ENCODE measurements at regions of chr1 and their contacts with region 1.

Region 1: GRCh38 chr1:59296358-59297256 is at the start of gene FGGY:
- DNase-seq: peak; percentile 97 to 99
- ATAC-seq: peak; percentile 93 to 98 (median 94)
- H3K4me3 ChIP-seq: peak within 1 kb of the TSS; percentile 45 to 68 (median 61)
- H3K27ac ChIP-seq: peak within 1 kb of the TSS; percentile 92 to 99 (median 97)
- H3K4me1 ChIP-seq: peaks cover 0 to 50% (median 17%) of the 10 kb centered on the region in 9 donors
- H3K27me3 ChIP-seq: no peaks in the 10 kb centered on the region
- CTCF ChIP-seq: peak in 1 of 9 donors; percentile 6
- total RNA-seq, gene FGGY: 26.3 to 51.8 (median 36.6) TPM

Region 2: DNA sequence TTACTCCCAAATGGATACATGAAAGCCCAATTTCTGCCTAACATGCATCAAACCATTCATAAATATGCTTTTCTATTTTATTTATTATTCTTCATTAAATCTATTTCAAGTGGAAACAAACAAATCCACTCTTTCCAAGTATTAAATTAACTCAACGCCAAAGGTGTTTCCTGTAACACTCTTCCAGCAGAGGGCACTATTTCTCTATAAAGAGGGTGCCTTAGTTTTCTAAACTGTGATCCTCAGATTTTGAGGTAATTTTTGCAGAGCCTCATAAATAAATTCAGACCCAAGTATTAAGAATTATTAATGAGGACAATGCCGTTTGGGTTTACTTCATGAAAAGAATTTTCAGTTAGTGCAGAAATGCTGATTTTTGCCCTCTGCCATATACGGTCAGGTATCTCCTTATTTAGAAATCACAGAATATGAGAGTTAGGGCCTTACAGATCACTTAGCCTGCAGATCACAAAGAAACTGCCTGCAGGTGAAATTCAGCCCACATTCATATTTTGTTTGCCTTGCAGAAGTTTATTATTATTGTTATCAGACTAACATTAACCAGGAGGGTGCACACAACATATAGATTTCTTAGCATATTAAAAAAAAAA is 556.6 kb before region 1 on chr1:
- intact Hi-C with region 1: loop called in 1 of 10 experiments (anchors 10 kb)
- DNase-seq: peak in 1 of 2 donors; percentile 52
- ATAC-seq: peak in 6 of 8 donors; percentile 49 to 76 (median 64)
- H3K4me3 ChIP-seq: no peak overlapping the region
- H3K27ac ChIP-seq: no peak overlapping the region
- H3K4me1 ChIP-seq: peaks cover 0 to 24% (median 3%) of the 10 kb centered on the region in 9 donors
- H3K27me3 ChIP-seq: no peaks in the 10 kb centered on the region
- CTCF ChIP-seq: peak; percentile 73 to 95 (median 86)

Region 3: GRCh38 chr1:58896246-58897183 is 400.1 kb before region 1 on chr1:
- intact Hi-C with region 1: loop called in 6 of 10 experiments (anchors 5 to 10 kb)
- DNase-seq: peak; percentile 60 to 73
- ATAC-seq: peak; percentile 43 to 91 (median 74)
- H3K4me3 ChIP-seq: no peak overlapping the region
- H3K27ac ChIP-seq: peak overlapping the region; percentile 52 to 93 (median 73)
- H3K4me1 ChIP-seq: peaks cover 35 to 86% (median 74%) of the 10 kb centered on the region in 9 donors
- H3K27me3 ChIP-seq: no peaks in the 10 kb centered on the region
- CTCF ChIP-seq: peak in 1 of 9 donors; percentile 18

Region 4: DNA sequence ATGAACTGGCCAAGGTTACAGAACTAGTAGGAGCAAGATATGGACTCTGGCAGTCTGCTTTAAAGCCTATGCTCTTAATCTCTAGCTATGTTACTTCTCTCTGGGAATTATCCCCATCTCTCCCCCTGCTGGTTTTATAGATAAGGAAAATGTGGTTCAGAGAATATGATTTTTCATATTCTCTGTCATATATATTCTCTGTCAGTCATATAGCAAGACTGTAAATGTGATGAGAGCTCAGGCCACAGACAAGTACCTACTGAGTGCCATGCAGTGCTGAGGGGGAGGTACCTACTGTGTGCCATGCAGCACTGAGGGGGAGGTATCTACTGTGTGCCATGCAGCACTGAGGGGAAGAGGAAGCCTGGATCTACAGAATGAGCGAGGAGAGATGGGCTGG is 220.0 kb before region 1 on chr1:
- intact Hi-C with region 1: loop called in 1 of 10 experiments (anchors 10 kb)
- DNase-seq: no peak
- ATAC-seq: peak in 1 of 8 donors; percentile 33
- H3K4me3 ChIP-seq: no peak overlapping the region
- H3K27ac ChIP-seq: no peak overlapping the region
- H3K4me1 ChIP-seq: peaks cover 0 to 29% (median 8%) of the 10 kb centered on the region in 9 donors
- H3K27me3 ChIP-seq: no peaks in the 10 kb centered on the region
- CTCF ChIP-seq: peak in 6 of 9 donors; percentile 12 to 46 (median 31)

Region 5: GRCh38 chr1:59128784-59129227 is 167.8 kb before region 1 on chr1:
- intact Hi-C with region 1: no loop called
- DNase-seq: no peak
- ATAC-seq: no peak
- H3K4me3 ChIP-seq: no peak overlapping the region
- H3K27ac ChIP-seq: no peak overlapping the region
- H3K4me1 ChIP-seq: peaks cover 0 to 15% (median 0%) of the 10 kb centered on the region in 9 donors
- H3K27me3 ChIP-seq: no peaks in the 10 kb centered on the region
- CTCF ChIP-seq: no peak

Region 6: DNA sequence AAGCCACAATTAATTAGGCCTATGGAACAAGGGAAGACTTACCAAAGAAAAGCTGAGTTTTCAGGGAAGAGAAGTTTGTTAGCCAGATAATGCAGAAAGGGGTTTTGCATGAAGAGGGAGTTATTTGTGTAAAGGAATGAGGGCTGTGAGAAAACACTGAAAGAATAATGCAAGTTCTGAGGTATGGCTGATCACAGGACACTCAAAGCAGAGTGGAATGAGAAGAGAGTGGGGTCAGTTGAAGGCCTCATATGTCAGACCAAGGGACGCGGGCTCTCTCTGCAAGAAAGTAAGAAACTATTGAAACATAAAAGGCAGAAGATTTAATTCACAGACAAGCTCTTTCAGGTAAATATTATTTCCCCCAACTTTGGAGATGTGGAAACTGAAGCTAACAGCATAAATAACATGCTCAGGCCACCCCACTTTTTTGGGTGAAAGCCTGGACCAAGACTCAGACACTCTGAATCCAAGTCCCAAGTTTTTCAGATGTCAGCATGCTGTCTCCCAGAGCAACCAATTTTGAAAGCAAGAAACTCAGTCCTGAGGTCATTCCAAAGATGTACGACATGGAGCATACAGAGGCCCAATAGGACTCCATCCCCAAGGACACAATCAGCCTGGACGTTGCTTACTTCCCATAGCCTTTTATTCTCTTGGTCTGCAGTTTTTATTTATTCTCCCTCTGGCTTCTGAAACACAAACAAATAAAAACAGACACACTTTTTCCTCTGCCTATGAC is 47.0 kb before region 1 on chr1:
- intact Hi-C with region 1: no loop called
- DNase-seq: no peak
- ATAC-seq: peak in 7 of 8 donors; percentile 55 to 85 (median 76)
- H3K4me3 ChIP-seq: no peak overlapping the region
- H3K27ac ChIP-seq: peak overlapping the region in 3 of 10 donors; percentile 25 to 44 (median 26)
- H3K4me1 ChIP-seq: no peaks in the 10 kb centered on the region
- H3K27me3 ChIP-seq: no peaks in the 10 kb centered on the region
- CTCF ChIP-seq: no peak

Region 7: DNA sequence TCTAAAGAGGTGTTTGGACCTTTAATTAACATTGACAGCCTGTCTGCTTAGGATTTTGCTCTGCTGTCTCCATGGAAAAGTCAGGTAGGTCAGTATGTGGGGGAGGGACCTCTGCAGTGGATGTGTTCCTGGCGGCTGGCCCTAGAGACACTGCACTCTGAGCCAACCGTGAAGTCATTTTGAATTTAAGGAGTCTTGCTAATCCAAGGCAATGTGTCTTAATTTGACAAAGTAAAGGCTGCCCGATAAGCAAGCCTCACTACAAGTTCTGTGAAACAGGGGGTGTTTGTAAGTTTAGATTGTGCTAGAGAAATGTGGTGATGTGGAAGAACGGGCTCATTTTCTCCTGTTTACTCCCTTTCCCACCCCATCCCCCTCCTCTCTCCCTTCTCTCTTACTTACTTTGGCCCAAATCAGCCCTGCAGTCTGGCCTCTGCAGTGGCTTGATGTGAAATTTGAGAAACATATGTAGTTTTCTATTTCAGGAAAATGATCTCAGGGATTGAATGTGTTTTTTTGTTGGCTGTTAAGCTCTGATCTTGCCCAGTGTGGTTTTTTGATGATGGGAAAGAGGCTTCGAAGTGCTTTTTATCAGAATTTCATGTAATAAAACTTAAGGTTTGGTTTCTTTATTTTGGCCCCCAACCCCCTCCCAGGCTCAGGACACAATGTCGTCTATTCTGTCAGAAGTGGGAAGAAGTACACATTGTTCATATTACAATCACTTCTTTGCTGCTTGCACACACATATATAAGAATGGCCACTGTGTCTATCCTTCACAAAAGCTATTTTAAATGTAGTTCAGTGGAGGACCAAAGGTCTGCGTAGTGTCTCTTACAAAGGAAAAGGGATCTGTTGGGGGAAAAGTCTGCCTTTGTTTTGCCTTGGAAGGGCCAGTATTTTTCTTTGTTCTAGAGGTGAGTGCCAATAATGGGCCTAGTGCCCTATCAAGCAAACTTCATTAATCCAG is 96.9 kb after region 1 on chr1:
- intact Hi-C with region 1: loop called in 3 of 10 experiments (anchors 2 to 5 kb)
- DNase-seq: peak; percentile 70 to 90
- ATAC-seq: peak; percentile 95 to 98 (median 98)
- H3K4me3 ChIP-seq: peak overlapping the region in 4 of 10 donors; percentile 3 to 13 (median 8)
- H3K27ac ChIP-seq: peak overlapping the region; percentile 72 to 96 (median 88)
- H3K4me1 ChIP-seq: peaks cover 6 to 44% (median 27%) of the 10 kb centered on the region in 9 donors
- H3K27me3 ChIP-seq: no peaks in the 10 kb centered on the region
- CTCF ChIP-seq: no peak

Region 8: DNA sequence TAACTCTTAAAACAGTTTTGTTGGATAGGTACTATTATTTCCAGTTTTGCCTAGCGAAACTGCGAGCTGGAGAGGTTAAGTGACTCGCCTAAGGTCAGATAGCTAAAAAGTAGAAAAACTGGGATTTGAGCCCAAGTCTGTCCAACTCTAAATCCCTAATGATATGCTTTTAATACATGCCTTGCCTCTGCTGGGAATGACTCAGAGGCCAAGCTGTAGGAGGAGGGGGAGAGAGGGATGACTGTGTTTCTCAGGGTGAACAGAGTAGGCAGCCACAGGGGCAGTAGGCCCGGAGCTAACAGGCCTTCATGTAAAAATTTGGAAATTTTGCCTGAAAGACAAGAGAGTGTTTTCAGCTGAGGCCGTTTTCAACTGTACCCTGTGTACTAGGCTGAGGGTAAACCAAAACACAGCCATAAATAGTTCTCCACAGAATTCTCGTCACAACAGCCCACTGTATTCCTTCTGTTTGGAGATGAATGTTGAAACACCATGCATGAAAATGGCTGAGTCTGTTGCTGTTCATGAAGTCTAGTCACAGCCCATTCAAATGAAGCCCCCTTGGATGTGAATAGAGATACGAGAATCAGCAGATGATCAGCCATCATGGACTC is 410.7 kb after region 1 on chr1:
- intact Hi-C with region 1: loop called in 1 of 10 experiments (anchors 10 kb)
- DNase-seq: peak in 1 of 2 donors; percentile 51
- ATAC-seq: peak; percentile 78 to 91 (median 84)
- H3K4me3 ChIP-seq: no peak overlapping the region
- H3K27ac ChIP-seq: peak overlapping the region; percentile 7 to 87 (median 60)
- H3K4me1 ChIP-seq: peaks cover 3 to 57% (median 45%) of the 10 kb centered on the region in 9 donors
- H3K27me3 ChIP-seq: no peaks in the 10 kb centered on the region
- CTCF ChIP-seq: no peak

Measured in heart right ventricle (tissue), 16 donors.